ENCODE measurements at regions of chr11 and their contacts with region 1.

Region 1: GRCh38 chr11:115132436-115133228 is 371.6 kb downstream of the CADM1 start:
- H3K4me3 ChIP-seq: no peak overlapping the region
- H3K27ac ChIP-seq: no peak overlapping the region
- H3K4me1 ChIP-seq: no peaks in the 10 kb centered on the region
- CTCF ChIP-seq: no peak

Region 2: GRCh38 chr11:115008799-115009198 is 123.8 kb before region 1 on chr11:
- CTCF ChIA-PET with region 1: no interaction called
- POLR2A ChIA-PET with region 1: no interaction called
- H3K4me3 ChIP-seq: no peak overlapping the region
- H3K27ac ChIP-seq: no peak overlapping the region
- H3K4me1 ChIP-seq: no peaks in the 10 kb centered on the region
- CTCF ChIP-seq: no peak

Region 3: DNA sequence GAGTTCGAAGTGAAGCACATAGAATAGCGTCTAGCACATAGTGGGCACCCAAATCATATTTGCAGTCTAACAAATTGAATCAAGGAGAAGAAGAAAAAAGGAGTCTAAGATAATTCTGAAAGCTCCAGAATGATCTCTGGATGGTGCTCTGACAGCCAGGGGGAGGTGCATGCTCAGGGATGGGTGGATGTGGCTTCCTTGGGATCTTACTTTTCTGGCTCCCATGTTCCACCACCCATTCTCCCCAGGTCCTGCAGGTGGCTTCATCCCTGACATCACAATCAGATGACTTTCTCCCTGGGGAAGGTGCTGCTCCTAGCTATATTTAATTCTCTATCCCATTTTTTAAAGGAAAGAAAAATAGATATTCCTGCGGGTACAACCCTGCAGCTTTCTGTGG is 10.4 kb before region 1 on chr11:
- CTCF ChIA-PET with region 1: interaction called, 12 read pairs
- POLR2A ChIA-PET with region 1: no interaction called
- H3K4me3 ChIP-seq: no peak overlapping the region
- H3K27ac ChIP-seq: no peak overlapping the region
- H3K4me1 ChIP-seq: no peaks in the 10 kb centered on the region
- CTCF ChIP-seq: peak; percentile 13; the same call in 1 of the 2 replicates

Region 4: DNA sequence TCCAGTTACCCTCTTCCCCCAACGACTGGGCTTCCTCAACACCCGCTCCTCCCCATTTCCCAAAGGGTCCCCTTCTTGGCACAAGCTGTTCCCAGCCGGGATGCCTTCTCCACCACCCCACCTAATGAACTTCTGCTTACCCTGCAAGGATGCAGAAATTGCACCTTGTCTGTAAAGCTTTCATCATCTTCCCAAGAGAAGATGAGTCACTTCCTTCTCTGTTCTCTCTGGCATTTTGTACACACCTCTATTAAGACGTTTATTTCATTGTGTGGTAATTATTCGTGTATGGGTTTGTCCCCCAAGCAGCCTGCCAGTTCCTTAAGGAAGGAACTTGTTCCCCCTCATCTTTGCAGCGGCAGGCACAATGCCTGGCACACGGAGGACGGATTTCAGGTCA is 20.5 kb after region 1 on chr11:
- CTCF ChIA-PET with region 1: no interaction called
- POLR2A ChIA-PET with region 1: no interaction called
- H3K4me3 ChIP-seq: no peak overlapping the region
- H3K27ac ChIP-seq: no peak overlapping the region
- H3K4me1 ChIP-seq: no peaks in the 10 kb centered on the region; the same call in none of the 2 replicates
- CTCF ChIP-seq: no peak